Endothelial cell of umbilical vein (primary cell): ENCODE measurements at regions of chr1 and their contacts with region 1.

Region 1: GRCh38 chr1:205273551-205273982 is 45.8 kb downstream of the TMCC2 start:
- DNase-seq: peak; percentile 69
- H3K4me3 ChIP-seq: no peak overlapping the region
- H3K27ac ChIP-seq: no peak overlapping the region
- H3K4me1 ChIP-seq: peaks cover 18% of the 10 kb centered on the region
- H3K27me3 ChIP-seq: no peaks in the 10 kb centered on the region
- CTCF ChIP-seq: peak; percentile 97 to 98
- POLR2A ChIP-seq: no peak

Region 2: DNA sequence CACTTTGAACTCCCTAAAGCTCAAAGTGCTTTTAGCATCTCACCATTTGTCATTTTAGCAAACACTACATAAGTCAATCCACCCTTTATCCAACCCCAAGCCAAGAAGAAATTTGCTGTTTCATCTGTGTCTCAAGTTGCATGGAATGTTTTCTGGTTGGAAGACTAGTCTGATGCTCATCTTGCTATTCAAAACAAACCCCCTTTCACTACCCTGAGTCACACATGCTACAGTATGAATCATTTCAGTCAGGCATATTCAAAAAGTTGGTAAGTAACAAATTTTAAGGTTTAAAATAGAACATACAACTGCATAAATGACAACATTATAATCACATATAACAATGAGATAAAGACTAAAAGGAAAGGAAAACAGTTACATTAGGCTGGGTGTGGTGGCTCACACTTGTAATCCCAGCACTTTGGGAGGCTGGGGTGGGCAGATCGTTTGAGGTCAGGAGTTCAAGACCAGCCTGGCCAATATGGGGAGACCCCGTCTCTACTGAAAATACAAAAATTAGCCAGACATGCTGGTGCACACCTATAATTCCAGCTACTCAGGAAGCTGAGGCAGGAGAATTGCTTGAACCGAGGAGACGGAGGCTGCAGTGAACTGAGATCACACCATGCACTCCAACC is 100.7 kb before region 1 on chr1:
- CTCF ChIA-PET with region 1: no interaction called
- POLR2A ChIA-PET with region 1: no interaction called
- dilution Hi-C with region 1: no loop called
- intact Hi-C with region 1: no loop called
- DNase-seq: peak; percentile 61
- H3K4me3 ChIP-seq: no peak overlapping the region
- H3K27ac ChIP-seq: no peak overlapping the region
- H3K4me1 ChIP-seq: peaks cover 14% of the 10 kb centered on the region
- H3K27me3 ChIP-seq: no peaks in the 10 kb centered on the region
- CTCF ChIP-seq: no peak
- POLR2A ChIP-seq: no peak

Region 3: GRCh38 chr1:205284343-205285144 is 11.0 kb after region 1 on chr1:
- CTCF ChIA-PET with region 1: interaction called, 53 read pairs
- POLR2A ChIA-PET with region 1: interaction called, 3 read pairs
- dilution Hi-C with region 1: no loop called
- intact Hi-C with region 1: no loop called
- DNase-seq: peak; percentile 95
- H3K4me3 ChIP-seq: no peak overlapping the region
- H3K27ac ChIP-seq: peak overlapping the region; percentile 45
- H3K4me1 ChIP-seq: peaks cover 34% of the 10 kb centered on the region
- H3K27me3 ChIP-seq: no peaks in the 10 kb centered on the region
- CTCF ChIP-seq: peak in 1 of 2 donors; percentile 9
- POLR2A ChIP-seq: peak; percentile 33

Region 4: GRCh38 chr1:205300886-205301821 is 27.6 kb after region 1 on chr1:
- CTCF ChIA-PET with region 1: interaction called, 36 read pairs
- POLR2A ChIA-PET with region 1: no interaction called
- dilution Hi-C with region 1: no loop called
- intact Hi-C with region 1: no loop called
- DNase-seq: peak; percentile 62
- H3K4me3 ChIP-seq: no peak overlapping the region
- H3K27ac ChIP-seq: no peak overlapping the region
- H3K4me1 ChIP-seq: peaks cover 17% of the 10 kb centered on the region
- H3K27me3 ChIP-seq: no peaks in the 10 kb centered on the region
- CTCF ChIP-seq: no peak
- POLR2A ChIP-seq: no peak

Region 5: DNA sequence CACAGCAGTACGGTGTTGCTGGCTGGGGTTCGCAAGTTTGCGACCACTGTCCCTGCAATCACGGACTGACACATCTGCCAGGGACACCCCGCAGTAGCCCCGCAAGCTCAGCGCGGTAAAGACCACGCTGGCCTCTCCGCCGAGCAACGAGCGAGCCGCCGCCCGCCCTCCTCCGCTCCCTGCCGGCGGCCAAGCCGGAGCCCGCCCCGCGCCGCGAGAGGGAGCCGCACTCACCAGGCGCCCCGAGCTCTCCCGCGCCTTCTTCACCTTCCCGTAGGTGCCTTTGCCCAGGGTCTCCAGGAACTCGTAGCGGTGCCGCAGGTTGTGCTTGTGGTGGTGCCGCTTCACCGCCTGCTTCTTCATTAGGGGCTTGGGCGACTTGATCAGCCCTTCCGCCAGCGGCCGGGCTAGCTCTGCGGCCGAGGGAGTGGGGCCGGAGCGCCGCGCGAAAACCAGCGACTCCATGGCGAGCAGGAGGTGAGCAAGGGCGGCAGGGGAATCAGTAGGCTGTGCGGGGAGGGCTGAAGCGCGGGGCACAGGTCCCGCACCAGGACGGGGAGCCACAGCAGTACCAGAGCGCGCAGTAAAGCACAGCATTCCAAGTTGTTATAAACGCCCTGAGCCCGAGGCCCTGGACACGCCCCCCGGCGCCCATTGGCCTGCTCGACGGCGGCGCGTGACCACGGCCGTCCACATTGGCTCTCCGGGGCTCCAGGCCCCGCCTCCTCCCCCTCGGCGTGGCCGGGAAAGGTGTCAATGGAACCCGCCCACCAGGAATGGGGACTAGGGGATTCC is 47.8 kb after region 1 on chr1 and contains the start of gene NUAK2:
- CTCF ChIA-PET with region 1: interaction called, 1,536 read pairs
- POLR2A ChIA-PET with region 1: interaction called, 7 read pairs
- dilution Hi-C with region 1: no loop called
- intact Hi-C with region 1: loop called (anchors 1 kb)
- DNase-seq: peak; percentile 89
- H3K4me3 ChIP-seq: peak within 1 kb of the TSS; percentile 58 to 68 (median 65)
- H3K27ac ChIP-seq: no peak within 1 kb of the TSS
- H3K4me1 ChIP-seq: peaks cover 18% of the 10 kb centered on the region
- H3K27me3 ChIP-seq: peaks cover 0 to 3% of the 10 kb centered on the region in 2 experiments
- CTCF ChIP-seq: peak; percentile 8 to 43
- POLR2A ChIP-seq: no peak
- total RNA-seq, gene NUAK2: 2.3 and 2.5 TPM in 2 replicates